MCF 10A (cell line): ENCODE measurements at regions of chr2 and their contacts with region 1.

Region 1: DNA sequence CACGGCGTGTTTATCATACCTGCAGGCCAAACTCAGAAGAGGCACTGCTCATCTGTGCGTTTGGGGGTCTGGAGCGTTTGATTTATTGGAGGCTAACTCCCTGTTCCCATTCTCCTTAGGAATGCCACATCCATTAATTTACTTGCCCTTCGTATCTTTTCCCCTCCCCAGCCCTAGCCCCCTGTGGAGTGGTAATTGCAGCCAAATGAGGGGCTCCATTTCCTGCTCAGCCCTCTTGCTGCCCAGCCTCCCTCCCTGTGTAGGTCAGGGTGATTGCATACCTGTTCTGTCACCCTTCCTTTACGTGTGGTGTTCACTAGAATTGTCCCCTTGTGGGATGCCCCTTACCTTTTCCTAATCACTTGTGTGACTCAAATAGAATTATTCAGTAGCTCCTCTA is 120.4 kb downstream of the MAP3K20 start:
- DNase-seq: no peak
- H3K4me3 Mint-ChIP-seq: no peak overlapping the region
- H3K27ac Mint-ChIP-seq: peak overlapping the region; percentile 23
- H3K4me1 Mint-ChIP-seq: peaks cover 13% of the 10 kb centered on the region
- H3K27me3 Mint-ChIP-seq: no peaks in the 10 kb centered on the region
- CTCF ChIP-seq: no peak

Region 2: GRCh38 chr2:173184031-173185004 is 11.8 kb before region 1 on chr2:
- CTCF ChIA-PET with region 1: no interaction called
- POLR2A ChIA-PET with region 1: interaction called, 11 read pairs
- intact Hi-C with region 1: no loop called
- DNase-seq: peak; percentile 99
- H3K4me3 Mint-ChIP-seq: no peak overlapping the region
- H3K27ac Mint-ChIP-seq: peak overlapping the region; percentile 1
- H3K4me1 Mint-ChIP-seq: peaks cover 23% of the 10 kb centered on the region
- H3K27me3 Mint-ChIP-seq: no peaks in the 10 kb centered on the region
- CTCF ChIP-seq: no peak